Adrenal gland (tissue), 19 donors: ENCODE measurements at regions of chr2 and their contacts with region 1.

Region 1: GRCh38 chr2:11124503-11125068 is 30.7 kb upstream of the SLC66A3 start:
- DNase-seq: peak; percentile 44 to 81 (median 61)
- H3K4me3 ChIP-seq: no peak overlapping the region
- H3K27ac ChIP-seq: no peak overlapping the region
- H3K4me1 ChIP-seq: peaks cover 0 to 2% of the 10 kb centered on the region in 2 donors
- H3K27me3 ChIP-seq: peaks cover 12% of the 10 kb centered on the region
- CTCF ChIP-seq: peak; percentile 54 to 87 (median 73)
- POLR2A ChIP-seq: no peak

Region 2: DNA sequence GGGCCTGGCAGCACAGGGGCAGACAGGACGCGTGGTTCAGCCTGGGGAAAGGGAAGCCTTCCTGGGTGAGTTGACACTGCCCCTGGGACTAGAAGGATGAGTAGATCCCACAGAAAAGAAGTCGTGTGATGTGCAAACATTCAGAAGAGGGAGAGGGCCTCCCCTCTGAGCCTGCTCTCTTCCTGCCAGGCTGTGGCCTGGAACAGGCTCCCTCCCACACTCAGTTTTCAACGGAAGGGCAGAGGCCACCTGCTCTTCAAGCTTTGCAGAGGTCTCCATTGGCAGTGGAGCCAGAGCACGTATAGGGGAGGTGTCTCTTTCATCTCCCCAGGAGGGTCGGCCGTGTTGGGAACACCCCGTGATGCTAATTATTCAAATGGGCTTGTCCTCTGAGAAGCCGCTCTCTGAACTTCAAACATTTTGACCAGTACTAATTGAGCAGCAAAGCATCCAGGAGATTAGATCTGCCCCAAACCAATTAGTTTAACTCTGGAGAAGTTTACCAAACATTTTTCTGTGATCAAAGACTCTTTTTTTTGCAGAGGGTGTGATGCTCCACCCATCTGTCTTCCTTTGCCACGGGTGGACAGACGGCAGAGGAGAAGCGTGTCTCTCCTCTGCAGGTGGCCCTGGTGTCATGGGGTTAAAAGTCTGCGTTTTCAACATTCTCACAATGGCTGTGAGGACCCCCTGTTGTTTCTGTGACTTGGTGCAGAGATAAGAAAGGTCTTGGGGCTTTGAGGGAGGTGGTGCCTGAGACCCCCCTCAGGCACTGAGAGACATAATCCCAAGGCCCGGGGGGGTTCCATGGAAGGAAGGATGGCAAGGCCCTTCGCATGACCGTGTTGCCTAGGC is 646.9 kb before region 1 on chr2:
- intact Hi-C with region 1: no loop called
- DNase-seq: no peak
- H3K4me3 ChIP-seq: no peak overlapping the region
- H3K27ac ChIP-seq: no peak overlapping the region
- H3K4me1 ChIP-seq: no peaks in the 10 kb centered on the region
- H3K27me3 ChIP-seq: no peaks in the 10 kb centered on the region
- CTCF ChIP-seq: no peak
- POLR2A ChIP-seq: no peak

Region 3: GRCh38 chr2:10832203-10832936 is 292.2 kb before region 1 on chr2:
- intact Hi-C with region 1: loop called (anchors 2 to 5 kb)
- DNase-seq: peak; percentile 72 to 90 (median 83)
- H3K4me3 ChIP-seq: no peak overlapping the region
- H3K27ac ChIP-seq: no peak overlapping the region
- H3K4me1 ChIP-seq: no peaks in the 10 kb centered on the region
- H3K27me3 ChIP-seq: peaks cover 3% of the 10 kb centered on the region
- CTCF ChIP-seq: peak; percentile 91 to 98 (median 94)
- POLR2A ChIP-seq: no peak

Region 4: GRCh38 chr2:11583840-11584524 is 459.4 kb after region 1 on chr2:
- intact Hi-C with region 1: loop called in 1 of 2 experiments (anchors 10 kb)
- DNase-seq: peak; percentile 77 to 91 (median 86)
- H3K4me3 ChIP-seq: no peak overlapping the region
- H3K27ac ChIP-seq: no peak overlapping the region
- H3K4me1 ChIP-seq: no peaks in the 10 kb centered on the region
- H3K27me3 ChIP-seq: no peaks in the 10 kb centered on the region
- CTCF ChIP-seq: peak; percentile 77 to 96 (median 92)
- POLR2A ChIP-seq: no peak